ENCODE measurements at regions of chr11 and their contacts with region 1.

Region 1: GRCh38 chr11:118488480-118489109 is 38.7 kb upstream of the TTC36 start:
- DNase-seq: peak; percentile 35
- ATAC-seq: peak; percentile 84
- H3K4me3 ChIP-seq: no peak overlapping the region
- H3K27ac ChIP-seq: no peak overlapping the region
- H3K4me1 ChIP-seq: no peaks in the 10 kb centered on the region
- H3K27me3 ChIP-seq: no peaks in the 10 kb centered on the region
- CTCF ChIP-seq: peak; percentile 72 to 95 (median 80)
- EP300 ChIP-seq: no peak
- POLR2A ChIP-seq: no peak
- RAD21 ChIP-seq: peak; percentile 96

Region 2: GRCh38 chr11:118281284-118281683 is 207.3 kb before region 1 on chr11:
- CTCF ChIA-PET with region 1: no interaction called
- POLR2A ChIA-PET with region 1: no interaction called
- RAD21 ChIA-PET with region 1: no interaction called
- SMC1A ChIA-PET with region 1: no interaction called
- in situ Hi-C with region 1: no loop called
- intact Hi-C with region 1: no loop called
- DNase-seq: no peak
- ATAC-seq: peak; percentile 89
- H3K4me3 ChIP-seq: no peak overlapping the region
- H3K27ac ChIP-seq: no peak overlapping the region
- H3K4me1 ChIP-seq: peaks cover 13% of the 10 kb centered on the region; the same call in 1 of the 2 replicates
- H3K27me3 ChIP-seq: no peaks in the 10 kb centered on the region
- CTCF ChIP-seq: no peak
- EP300 ChIP-seq: no peak
- POLR2A ChIP-seq: no peak
- RAD21 ChIP-seq: no peak

Region 3: GRCh38 chr11:118295834-118296454 is 192.7 kb before region 1 on chr11:
- CTCF ChIA-PET with region 1: interaction called, 10 read pairs
- POLR2A ChIA-PET with region 1: no interaction called
- RAD21 ChIA-PET with region 1: interaction called, 6 read pairs
- SMC1A ChIA-PET with region 1: interaction called, 3 read pairs
- in situ Hi-C with region 1: no loop called
- intact Hi-C with region 1: loop called (anchors 5 kb)
- DNase-seq: no peak
- ATAC-seq: peak; percentile 88
- H3K4me3 ChIP-seq: no peak overlapping the region
- H3K27ac ChIP-seq: no peak overlapping the region
- H3K4me1 ChIP-seq: no peaks in the 10 kb centered on the region
- H3K27me3 ChIP-seq: no peaks in the 10 kb centered on the region; a peak in 1 of 4 replicates
- CTCF ChIP-seq: peak; percentile 60 to 64 (median 60); a peak in 5 of 6 replicates
- EP300 ChIP-seq: no peak
- POLR2A ChIP-seq: no peak
- RAD21 ChIP-seq: peak; percentile 66

Region 4: GRCh38 chr11:118359295-118359958 is 129.2 kb before region 1 on chr11 and contains the start of gene UBE4A:
- CTCF ChIA-PET with region 1: interaction called, 10 read pairs
- POLR2A ChIA-PET with region 1: no interaction called
- RAD21 ChIA-PET with region 1: interaction called, 4 read pairs
- SMC1A ChIA-PET with region 1: interaction called, 4 read pairs
- in situ Hi-C with region 1: no loop called
- intact Hi-C with region 1: no loop called
- DNase-seq: peak; percentile 92
- ATAC-seq: peak; percentile 97
- H3K4me3 ChIP-seq: peak within 1 kb of the TSS; percentile 93
- H3K27ac ChIP-seq: peak within 1 kb of the TSS; percentile 76
- H3K4me1 ChIP-seq: peaks cover 7% of the 10 kb centered on the region; the same call in 1 of the 2 replicates
- H3K27me3 ChIP-seq: no peaks in the 10 kb centered on the region
- CTCF ChIP-seq: no peak
- EP300 ChIP-seq: peak in 1 of 2 experiments; percentile 56; a peak in 1 of 4 replicates
- POLR2A ChIP-seq: peak; percentile 97
- RAD21 ChIP-seq: no peak
- polyA plus RNA-seq, gene UBE4A: 6.2 to 13.9 TPM

Region 5: GRCh38 chr11:118380571-118380970 is 108.0 kb before region 1 on chr11:
- CTCF ChIA-PET with region 1: interaction called, 15 read pairs
- POLR2A ChIA-PET with region 1: no interaction called
- RAD21 ChIA-PET with region 1: interaction called, 4 read pairs
- SMC1A ChIA-PET with region 1: interaction called, 7 read pairs
- in situ Hi-C with region 1: loop called (anchors 25 kb)
- intact Hi-C with region 1: no loop called
- DNase-seq: no peak
- ATAC-seq: no peak
- H3K4me3 ChIP-seq: no peak overlapping the region
- H3K27ac ChIP-seq: no peak overlapping the region
- H3K4me1 ChIP-seq: no peaks in the 10 kb centered on the region
- H3K27me3 ChIP-seq: no peaks in the 10 kb centered on the region
- CTCF ChIP-seq: no peak
- EP300 ChIP-seq: no peak
- POLR2A ChIP-seq: no peak
- RAD21 ChIP-seq: no peak

Region 6: GRCh38 chr11:118401151-118401878 is 87.3 kb before region 1 on chr11 and contains the start of gene ATP5MG:
- CTCF ChIA-PET with region 1: interaction called, 29 read pairs
- POLR2A ChIA-PET with region 1: interaction called, 6 read pairs
- RAD21 ChIA-PET with region 1: interaction called, 4 read pairs
- SMC1A ChIA-PET with region 1: interaction called, 6 read pairs
- in situ Hi-C with region 1: loop called (anchors 25 kb)
- intact Hi-C with region 1: loop called (anchors 1 kb)
- DNase-seq: peak; percentile 93
- ATAC-seq: peak; percentile 78
- H3K4me3 ChIP-seq: peak within 1 kb of the TSS; percentile 89
- H3K27ac ChIP-seq: peak within 1 kb of the TSS; percentile 98
- H3K4me1 ChIP-seq: peaks cover 15% of the 10 kb centered on the region; the same call in 1 of the 2 replicates
- H3K27me3 ChIP-seq: no peaks in the 10 kb centered on the region
- CTCF ChIP-seq: no peak
- EP300 ChIP-seq: no peak
- POLR2A ChIP-seq: peak; percentile 84
- RAD21 ChIP-seq: no peak
- polyA plus RNA-seq, gene ATP5MG: 2,154 to 2,276 TPM

Region 7: DNA sequence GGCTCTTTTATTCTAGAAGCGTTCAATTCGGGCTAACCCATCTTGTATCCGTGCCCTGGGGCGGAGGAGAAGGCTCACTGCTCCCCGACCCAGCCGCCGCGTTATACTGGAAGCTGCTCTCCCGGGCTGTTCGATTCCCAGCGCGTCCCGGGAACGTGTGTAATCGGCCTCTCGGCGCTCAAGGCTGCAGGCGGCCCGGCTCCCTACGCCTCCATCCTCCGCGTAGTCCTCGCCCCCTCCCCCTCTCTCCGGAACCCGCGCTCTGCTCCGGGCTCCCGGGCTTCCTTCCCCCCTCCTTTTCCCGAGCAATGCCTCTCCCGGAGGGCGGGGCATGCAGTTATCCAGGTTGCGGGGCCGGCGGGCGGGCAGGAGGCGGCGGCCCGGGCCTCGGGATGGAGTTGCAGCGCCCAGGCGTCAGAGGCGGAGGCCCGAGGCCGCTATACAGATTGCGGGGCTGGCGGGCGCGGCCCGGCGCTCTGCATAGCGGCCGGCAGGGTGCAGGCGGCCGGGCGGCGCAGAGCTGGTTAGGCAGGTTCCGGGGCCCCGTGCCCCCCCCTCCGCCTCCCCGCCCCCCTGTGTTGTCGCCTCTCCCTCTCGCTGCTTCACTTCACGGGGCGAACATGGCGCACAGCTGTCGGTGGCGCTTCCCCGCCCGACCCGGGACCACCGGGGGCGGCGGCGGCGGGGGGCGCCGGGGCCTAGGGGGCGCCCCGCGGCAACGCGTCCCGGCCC is 52.5 kb before region 1 on chr11 and contains the start of gene KMT2A:
- CTCF ChIA-PET with region 1: interaction called, 12 read pairs
- POLR2A ChIA-PET with region 1: no interaction called
- RAD21 ChIA-PET with region 1: interaction called, 11 read pairs
- SMC1A ChIA-PET with region 1: interaction called, 8 read pairs
- in situ Hi-C with region 1: no loop called
- intact Hi-C with region 1: loop called (anchors 2 kb)
- DNase-seq: no peak
- ATAC-seq: peak; percentile 54
- H3K4me3 ChIP-seq: peak within 1 kb of the TSS; percentile 94
- H3K27ac ChIP-seq: peak within 1 kb of the TSS; percentile 94
- H3K4me1 ChIP-seq: peaks cover 5% of the 10 kb centered on the region; the same call in 1 of the 2 replicates
- H3K27me3 ChIP-seq: no peaks in the 10 kb centered on the region
- CTCF ChIP-seq: no peak
- EP300 ChIP-seq: no peak
- POLR2A ChIP-seq: peak; percentile 74
- RAD21 ChIP-seq: no peak
- polyA plus RNA-seq, gene KMT2A: 6.1 to 7.4 TPM

Region 8: GRCh38 chr11:118565051-118565450 is 76.5 kb after region 1 on chr11:
- CTCF ChIA-PET with region 1: no interaction called
- POLR2A ChIA-PET with region 1: no interaction called
- RAD21 ChIA-PET with region 1: interaction called, 3 read pairs
- SMC1A ChIA-PET with region 1: interaction called, 3 read pairs
- in situ Hi-C with region 1: no loop called
- intact Hi-C with region 1: loop called (anchors 1 kb)
- DNase-seq: no peak
- ATAC-seq: no peak
- H3K4me3 ChIP-seq: peak overlapping the region; percentile 26; the same call in 1 of the 2 replicates
- H3K27ac ChIP-seq: no peak overlapping the region
- H3K4me1 ChIP-seq: 0 out of 2 replicates have a peak, but pooled peaks cover 4% of the 10 kb centered on the region
- H3K27me3 ChIP-seq: no peaks in the 10 kb centered on the region
- CTCF ChIP-seq: no peak
- EP300 ChIP-seq: no peak
- POLR2A ChIP-seq: no peak
- RAD21 ChIP-seq: no peak

Region 9: DNA sequence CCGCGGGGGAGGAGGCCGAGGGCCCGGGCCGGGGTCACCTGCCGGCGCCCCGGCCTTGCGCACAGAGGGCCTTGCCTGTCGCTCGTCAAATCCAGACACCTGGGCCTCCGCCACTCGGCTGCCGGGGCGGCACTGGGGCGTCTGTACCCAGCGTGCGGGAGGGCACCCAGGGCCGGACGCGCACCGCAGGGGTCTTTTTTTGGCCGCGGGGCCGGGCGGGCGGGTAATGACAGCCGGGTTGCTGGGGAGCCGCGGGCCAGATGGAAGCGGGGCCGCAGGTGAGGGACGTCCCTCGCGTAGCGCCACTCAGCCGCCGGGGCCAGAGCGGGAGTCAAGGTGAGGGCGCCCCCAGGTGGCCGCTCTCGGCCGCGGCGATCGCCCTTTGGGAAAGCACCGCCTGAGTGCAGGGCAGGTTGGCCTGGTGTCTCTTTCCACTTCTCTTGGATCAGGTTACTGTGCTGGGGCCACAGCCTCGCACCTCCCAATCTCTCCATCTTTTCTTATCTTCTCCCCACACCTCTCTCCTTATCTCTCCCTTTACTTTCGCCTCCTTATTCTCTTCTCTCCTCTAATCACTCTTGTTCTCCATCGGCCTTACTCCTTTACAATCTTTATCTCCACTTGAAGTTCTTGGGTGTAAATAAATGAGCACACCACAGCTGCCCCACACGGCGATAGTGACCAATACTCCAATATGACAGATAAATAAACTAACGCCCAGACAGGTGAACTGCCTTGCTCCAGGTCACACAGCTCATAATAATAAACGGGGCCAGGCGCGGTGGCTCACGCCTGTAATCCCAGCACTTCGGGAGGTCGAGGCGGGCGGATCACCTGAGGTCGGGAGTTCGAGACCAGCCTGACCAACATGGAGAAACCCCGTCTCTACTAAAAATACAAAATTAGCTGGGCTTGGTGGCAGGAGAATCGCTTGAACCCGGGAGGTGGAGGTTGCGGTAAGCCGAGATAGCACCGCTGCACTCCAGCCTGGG is 122.5 kb after region 1 on chr11:
- CTCF ChIA-PET with region 1: no interaction called
- POLR2A ChIA-PET with region 1: no interaction called
- RAD21 ChIA-PET with region 1: no interaction called
- SMC1A ChIA-PET with region 1: no interaction called
- in situ Hi-C with region 1: no loop called
- intact Hi-C with region 1: no loop called
- DNase-seq: no peak
- ATAC-seq: peak; percentile 84
- H3K4me3 ChIP-seq: no peak overlapping the region; the same call in 1 of the 2 replicates
- H3K27ac ChIP-seq: no peak overlapping the region
- H3K4me1 ChIP-seq: peaks cover 8% of the 10 kb centered on the region
- H3K27me3 ChIP-seq: peaks cover 22 to 36% of the 10 kb centered on the region in 2 experiments; a peak in 3 of 4 replicates
- CTCF ChIP-seq: peak; percentile 72 to 88 (median 87); a peak in 5 of 6 replicates
- EP300 ChIP-seq: no peak
- POLR2A ChIP-seq: no peak
- RAD21 ChIP-seq: peak; percentile 46

Measured in GM12878 (cell line).